Activated CD4-positive, alpha-beta T cell treated with anti-CD3 and anti-CD28 coated beads for 36 hours (primary cell): ENCODE measurements at regions of chr17 and their contacts with region 1.

Region 1: DNA sequence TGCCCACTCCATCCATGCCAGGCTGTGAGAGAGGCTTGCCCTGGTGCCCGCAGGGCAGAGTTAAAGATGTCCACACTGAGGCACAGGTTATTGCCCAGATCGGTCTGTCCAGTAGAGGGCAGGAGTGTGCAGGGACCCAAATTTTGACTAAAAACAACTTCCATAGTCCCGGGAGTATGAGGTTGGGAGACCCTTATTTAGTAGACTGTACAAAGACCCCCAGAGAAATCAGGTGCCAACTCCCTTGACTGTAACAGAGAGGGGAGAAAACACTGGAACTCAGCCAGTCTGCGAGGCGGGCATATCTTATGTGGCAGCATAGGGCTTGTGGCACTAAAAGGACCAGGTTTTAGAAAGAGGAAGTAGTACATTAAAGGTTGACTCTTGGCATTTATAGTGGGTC is 43.4 kb downstream of the HNF1B start:
- DNase-seq: peak; percentile 75
- ATAC-seq: peak; percentile 67
- H3K4me3 Mint-ChIP-seq: no peak overlapping the region
- H3K27ac Mint-ChIP-seq: no peak overlapping the region
- H3K4me1 Mint-ChIP-seq: peaks cover 16% of the 10 kb centered on the region
- H3K27me3 Mint-ChIP-seq: peaks cover 23% of the 10 kb centered on the region

Region 2: DNA sequence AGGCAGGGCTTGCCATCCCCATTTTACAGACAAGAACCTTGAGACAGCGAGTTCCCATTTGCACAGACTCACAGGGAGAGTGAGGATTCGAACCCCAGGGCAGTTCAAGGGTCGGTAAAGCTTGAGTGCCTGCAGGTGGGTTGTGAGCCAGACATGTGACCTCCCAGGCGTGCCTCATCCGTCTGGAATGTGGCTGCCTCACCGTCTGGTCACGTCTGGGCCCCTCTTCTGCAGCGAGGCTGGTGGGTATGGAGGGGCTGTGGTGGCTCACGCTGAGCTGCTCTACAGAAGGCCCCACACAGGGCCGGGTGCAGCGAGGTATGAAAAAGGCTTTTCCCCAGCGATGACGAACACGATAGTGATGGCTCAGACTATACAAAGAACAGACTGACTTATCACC is 800.0 kb before region 1 on chr17:
- CTCF ChIA-PET with region 1: no interaction called
- POLR2A ChIA-PET with region 1: no interaction called
- intact Hi-C with region 1: no loop called
- DNase-seq: no peak
- ATAC-seq: no peak
- H3K4me3 Mint-ChIP-seq: no peak overlapping the region
- H3K27ac Mint-ChIP-seq: no peak overlapping the region
- H3K4me1 Mint-ChIP-seq: no peaks in the 10 kb centered on the region
- H3K27me3 Mint-ChIP-seq: peaks cover 13% of the 10 kb centered on the region

Region 3: GRCh38 chr17:37527249-37527851 is 174.1 kb before region 1 on chr17:
- CTCF ChIA-PET with region 1: no interaction called
- POLR2A ChIA-PET with region 1: no interaction called
- intact Hi-C with region 1: loop called in 1 of 2 experiments (anchors 2 kb)
- DNase-seq: peak; percentile 25
- ATAC-seq: peak; percentile 86
- H3K4me3 Mint-ChIP-seq: no peak overlapping the region
- H3K27ac Mint-ChIP-seq: no peak overlapping the region
- H3K4me1 Mint-ChIP-seq: peaks cover 7% of the 10 kb centered on the region
- H3K27me3 Mint-ChIP-seq: no peaks in the 10 kb centered on the region

Region 4: GRCh38 chr17:37643118-37643766 is 58.3 kb before region 1 on chr17 and contains the start of gene DDX52:
- CTCF ChIA-PET with region 1: interaction called, 3 read pairs
- POLR2A ChIA-PET with region 1: no interaction called
- intact Hi-C with region 1: loop called in 1 of 2 experiments (anchors 1 kb)
- DNase-seq: peak; percentile 93
- ATAC-seq: peak; percentile 99
- H3K4me3 Mint-ChIP-seq: peak within 1 kb of the TSS; percentile 94
- H3K27ac Mint-ChIP-seq: peak within 1 kb of the TSS; percentile 91
- H3K4me1 Mint-ChIP-seq: peaks cover 25% of the 10 kb centered on the region
- H3K27me3 Mint-ChIP-seq: peaks cover 24% of the 10 kb centered on the region
- total RNA-seq, gene DDX52: 34.6 to 41.7 TPM

Region 5: GRCh38 chr17:37718324-37719048 is 17.0 kb after region 1 on chr17:
- CTCF ChIA-PET with region 1: no interaction called
- POLR2A ChIA-PET with region 1: no interaction called
- intact Hi-C with region 1: no loop called
- DNase-seq: no peak
- ATAC-seq: no peak
- H3K4me3 Mint-ChIP-seq: no peak overlapping the region
- H3K27ac Mint-ChIP-seq: no peak overlapping the region
- H3K4me1 Mint-ChIP-seq: peaks cover 6% of the 10 kb centered on the region
- H3K27me3 Mint-ChIP-seq: peaks cover 7% of the 10 kb centered on the region

Region 6: GRCh38 chr17:37752482-37752881 is 51.0 kb after region 1 on chr17:
- CTCF ChIA-PET with region 1: no interaction called
- POLR2A ChIA-PET with region 1: no interaction called
- intact Hi-C with region 1: no loop called
- DNase-seq: no peak
- ATAC-seq: no peak
- H3K4me3 Mint-ChIP-seq: no peak overlapping the region
- H3K27ac Mint-ChIP-seq: no peak overlapping the region
- H3K4me1 Mint-ChIP-seq: no peaks in the 10 kb centered on the region
- H3K27me3 Mint-ChIP-seq: peaks cover 23% of the 10 kb centered on the region

Region 7: GRCh38 chr17:37770631-37771518 is 69.4 kb after region 1 on chr17:
- CTCF ChIA-PET with region 1: no interaction called
- POLR2A ChIA-PET with region 1: no interaction called
- intact Hi-C with region 1: loop called in 1 of 2 experiments (anchors 5 kb)
- DNase-seq: peak; percentile 72
- ATAC-seq: no peak
- H3K4me3 Mint-ChIP-seq: no peak overlapping the region
- H3K27ac Mint-ChIP-seq: no peak overlapping the region
- H3K4me1 Mint-ChIP-seq: peaks cover 24% of the 10 kb centered on the region
- H3K27me3 Mint-ChIP-seq: peaks cover 24% of the 10 kb centered on the region